Transverse colon (tissue), 4 donors: ENCODE measurements at regions of chr3 and their contacts with region 1.

Region 1: DNA sequence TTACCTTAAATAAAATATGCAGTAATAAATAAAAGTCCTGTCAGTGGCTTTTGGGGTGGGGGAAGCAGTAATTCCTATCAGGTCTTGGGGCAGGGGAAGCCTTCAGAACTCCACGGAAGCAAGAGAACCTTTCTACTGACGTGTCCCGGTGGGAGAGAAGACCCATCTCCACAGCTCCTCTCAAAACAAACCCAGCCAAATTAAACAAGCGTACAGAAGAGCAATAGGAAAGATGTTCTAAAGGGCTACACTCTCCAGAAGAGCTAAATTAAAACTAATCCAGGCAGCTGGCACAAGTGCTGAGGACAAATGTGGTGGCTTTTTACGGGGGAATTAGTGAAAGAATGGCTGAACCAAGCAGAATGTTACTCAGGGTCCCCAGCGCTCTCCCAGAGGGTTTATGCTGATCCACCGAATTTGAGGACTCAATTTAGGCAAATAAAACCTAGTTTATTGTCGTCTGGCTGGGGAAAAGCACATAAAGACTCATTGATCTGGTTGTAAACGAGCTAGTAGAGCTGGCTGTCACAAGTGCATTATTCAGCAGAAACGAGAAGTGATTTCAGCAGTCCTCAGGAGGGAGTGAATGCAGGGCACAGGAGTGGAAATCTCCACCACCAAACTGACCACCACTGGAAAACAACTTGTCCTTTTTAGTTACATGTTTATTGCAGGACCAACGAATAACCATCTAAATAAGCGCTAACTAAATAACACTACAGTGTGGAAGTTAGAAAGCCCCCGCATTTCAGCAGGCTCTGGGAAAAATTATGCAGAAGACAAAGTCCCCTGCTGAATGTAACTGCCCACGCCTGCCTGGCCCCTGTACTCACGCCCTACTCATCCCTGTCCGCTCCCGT is 13.5 kb downstream of the BFSP2 start:
- DNase-seq: no peak
- H3K4me3 ChIP-seq: peak overlapping the region in 1 of 4 donors; percentile 8
- H3K27ac ChIP-seq: peak overlapping the region in 2 of 4 donors; percentile 21 to 24
- H3K4me1 ChIP-seq: peaks cover 0 to 15% (median 1%) of the 10 kb centered on the region in 4 donors
- H3K27me3 ChIP-seq: peaks cover 18% of the 10 kb centered on the region
- CTCF ChIP-seq: no peak
- EP300 ChIP-seq: no peak
- POLR2A ChIP-seq: no peak

Region 2: GRCh38 chr3:132722164-132723024 is 691.0 kb before region 1 on chr3 and contains the start of gene NPHP3:
- in situ Hi-C with region 1: no loop called
- intact Hi-C with region 1: loop called (anchors 10 kb)
- DNase-seq: peak; percentile 99
- H3K4me3 ChIP-seq: peak within 1 kb of the TSS; percentile 66 to 98 (median 83)
- H3K27ac ChIP-seq: peak within 1 kb of the TSS; percentile 91 to 99 (median 98)
- H3K4me1 ChIP-seq: peaks cover 5 to 39% (median 24%) of the 10 kb centered on the region in 4 donors
- H3K27me3 ChIP-seq: no peaks in the 10 kb centered on the region
- CTCF ChIP-seq: peak in 1 of 5 experiments; percentile 3
- EP300 ChIP-seq: no peak
- POLR2A ChIP-seq: peak; percentile 85
- total RNA-seq, gene NPHP3: 40.1 to 83.0 (median 64.7) TPM

Region 3: DNA sequence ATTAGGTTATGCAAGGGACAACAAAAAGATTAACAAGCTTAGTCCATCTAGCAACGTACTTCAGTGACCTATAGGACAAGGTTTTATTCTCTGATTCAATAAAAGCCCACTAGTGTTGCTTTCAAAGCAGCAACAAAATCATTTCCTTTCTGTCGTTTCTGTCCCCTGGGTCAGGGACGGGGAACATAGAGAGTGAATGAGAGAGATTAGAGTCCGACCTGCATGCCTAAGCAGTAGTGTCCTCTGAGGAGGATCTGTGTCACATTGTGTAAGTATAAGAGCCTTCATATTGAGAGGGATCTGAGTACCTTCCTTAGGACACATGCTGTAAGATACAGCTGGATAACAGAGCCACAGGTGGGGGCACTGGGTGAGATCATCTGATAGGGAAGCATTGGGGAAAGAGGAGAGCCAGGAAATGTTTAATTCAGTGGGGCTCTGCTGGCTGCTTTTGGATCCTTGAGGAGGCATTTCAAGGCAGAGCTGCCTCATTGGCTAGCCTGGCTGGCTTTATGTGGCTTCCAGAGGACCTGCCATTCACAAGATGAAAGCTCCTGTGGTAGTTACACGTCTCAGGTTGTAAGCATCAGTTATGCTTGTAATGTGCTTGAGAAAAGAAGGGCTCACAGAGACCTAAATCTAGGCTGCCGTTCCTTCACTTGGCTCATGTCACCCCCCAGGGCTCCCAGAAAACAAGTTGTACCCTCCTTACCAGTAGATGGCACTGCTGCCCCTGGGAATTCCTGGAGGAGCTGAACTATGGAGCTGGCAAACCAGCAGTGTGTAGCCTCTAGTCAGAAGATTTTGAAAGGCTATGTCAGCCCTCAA is 372.5 kb before region 1 on chr3:
- in situ Hi-C with region 1: no loop called
- intact Hi-C with region 1: loop called (anchors 1 kb)
- DNase-seq: peak; percentile 61
- H3K4me3 ChIP-seq: no peak overlapping the region
- H3K27ac ChIP-seq: no peak overlapping the region
- H3K4me1 ChIP-seq: peaks cover 0 to 9% (median 7%) of the 10 kb centered on the region in 4 donors
- H3K27me3 ChIP-seq: peaks cover 35% of the 10 kb centered on the region
- CTCF ChIP-seq: peak; percentile 43 to 64 (median 55)
- EP300 ChIP-seq: no peak
- POLR2A ChIP-seq: no peak

Region 4: DNA sequence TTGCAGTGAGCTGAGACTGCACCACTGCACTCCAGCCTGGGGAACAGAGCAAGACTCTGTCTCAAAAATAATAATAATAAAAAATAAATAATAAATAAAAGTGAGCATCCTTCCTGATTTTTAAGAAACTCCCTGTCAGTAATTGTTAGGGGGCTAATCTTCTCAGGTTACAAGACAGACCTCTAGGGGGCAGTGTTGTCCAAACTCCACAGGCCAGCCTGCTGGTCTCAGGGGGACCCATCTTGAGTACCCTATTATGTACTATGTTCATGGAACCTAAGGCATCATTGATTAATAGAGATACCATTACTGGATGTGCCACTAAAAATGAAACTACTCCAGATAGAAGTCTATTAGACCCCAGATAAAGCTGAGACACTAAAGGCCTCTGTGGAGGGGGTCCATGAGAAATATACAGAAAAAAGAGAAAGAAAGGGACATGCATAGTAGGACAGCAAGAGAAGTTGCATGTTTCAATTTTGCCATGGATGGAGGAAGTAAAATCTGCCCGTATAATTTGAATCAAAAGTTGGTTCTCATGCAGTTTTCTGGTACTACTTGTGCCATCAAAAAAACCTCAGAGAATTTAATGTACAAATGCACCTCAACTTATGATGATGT is 74.6 kb after region 1 on chr3:
- in situ Hi-C with region 1: no loop called
- intact Hi-C with region 1: no loop called
- DNase-seq: no peak
- H3K4me3 ChIP-seq: no peak overlapping the region
- H3K27ac ChIP-seq: peak overlapping the region in 3 of 4 donors; percentile 30 to 40 (median 35)
- H3K4me1 ChIP-seq: peaks cover 0 to 3% (median 0%) of the 10 kb centered on the region in 4 donors
- H3K27me3 ChIP-seq: no peaks in the 10 kb centered on the region
- CTCF ChIP-seq: peak; percentile 48 to 65 (median 64)
- EP300 ChIP-seq: no peak
- POLR2A ChIP-seq: no peak